IMR-90 (cell line): ENCODE measurements at regions of chr1 and their contacts with region 1.

Region 1: GRCh38 chr1:8077120-8077573 is 51.0 kb upstream of the ERRFI1 start:
- DNase-seq: peak; percentile 97
- ATAC-seq: peak; percentile 90
- H3K4me3 ChIP-seq: no peak overlapping the region
- H3K27ac ChIP-seq: peak overlapping the region; percentile 2; the same call in 1 of the 2 replicates
- H3K4me1 ChIP-seq: peaks cover 26% of the 10 kb centered on the region
- H3K27me3 ChIP-seq: no peaks in the 10 kb centered on the region
- CTCF ChIP-seq: no peak
- POLR2A ChIP-seq: peak; percentile 42; the same call in 1 of the 2 replicates
- RAD21 ChIP-seq: 0 out of 2 replicates have a peak, but pooled peaks have one; percentile 26

Region 2: GRCh38 chr1:7942214-7942921 is 134.8 kb before region 1 on chr1:
- CTCF ChIA-PET with region 1: no interaction called
- POLR2A ChIA-PET with region 1: no interaction called
- dilution Hi-C with region 1: no loop called
- in situ Hi-C with region 1: no loop called
- intact Hi-C with region 1: no loop called
- DNase-seq: peak; percentile 38
- ATAC-seq: peak; percentile 91
- H3K4me3 ChIP-seq: peak overlapping the region; percentile 7
- H3K27ac ChIP-seq: no peak overlapping the region
- H3K4me1 ChIP-seq: peaks cover 8% of the 10 kb centered on the region
- H3K27me3 ChIP-seq: peaks cover 19% of the 10 kb centered on the region
- CTCF ChIP-seq: peak; percentile 27; the same call in 1 of the 2 replicates
- POLR2A ChIP-seq: no peak
- RAD21 ChIP-seq: no peak

Region 3: GRCh38 chr1:8040586-8040985 is 36.6 kb before region 1 on chr1:
- CTCF ChIA-PET with region 1: no interaction called
- POLR2A ChIA-PET with region 1: interaction called, 9 read pairs
- dilution Hi-C with region 1: no loop called
- in situ Hi-C with region 1: no loop called
- intact Hi-C with region 1: loop called (anchors 5 kb)
- DNase-seq: peak; percentile 99
- ATAC-seq: peak; percentile 99
- H3K4me3 ChIP-seq: no peak overlapping the region
- H3K27ac ChIP-seq: peak overlapping the region; percentile 11
- H3K4me1 ChIP-seq: peaks cover 2% of the 10 kb centered on the region; the same call in 1 of the 2 replicates
- H3K27me3 ChIP-seq: no peaks in the 10 kb centered on the region
- CTCF ChIP-seq: no peak
- POLR2A ChIP-seq: no peak
- RAD21 ChIP-seq: peak; percentile 8; the same call in 1 of the 2 replicates